Heart left ventricle (tissue), 16 donors: ENCODE measurements at regions of chr6 and their contacts with region 1.

Region 1: DNA sequence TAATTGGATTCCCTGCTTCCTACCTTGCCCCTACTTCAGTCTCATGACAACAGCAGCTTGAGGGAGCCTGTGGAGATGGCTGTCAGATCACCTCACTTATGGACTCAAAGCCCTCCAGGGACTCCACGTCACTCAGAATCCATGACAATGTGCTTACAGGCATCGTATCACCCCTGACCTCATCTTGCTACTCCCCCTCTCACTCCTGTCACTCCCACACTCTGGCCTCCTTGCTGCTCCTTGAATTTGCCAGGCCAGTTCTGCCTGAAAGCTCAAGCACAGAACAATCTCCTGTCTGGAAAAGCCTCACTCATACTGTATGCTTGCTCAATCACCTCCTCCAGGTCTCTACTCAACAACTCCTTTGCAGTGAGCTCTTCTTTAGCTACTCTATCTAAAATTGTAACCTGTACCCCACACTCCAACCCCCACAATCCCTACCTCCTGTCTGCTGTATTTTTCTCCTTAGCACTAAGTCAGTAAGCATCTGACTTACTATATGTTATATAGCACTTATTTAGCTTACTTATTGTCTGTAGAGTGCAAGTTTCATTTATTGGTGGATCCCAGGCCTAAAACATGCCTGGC is 10.7 kb upstream of the GSTA4 start:
- DNase-seq: no peak
- ATAC-seq: no peak
- H3K4me3 ChIP-seq: no peak overlapping the region
- H3K27ac ChIP-seq: no peak overlapping the region
- H3K4me1 ChIP-seq: no peaks in the 10 kb centered on the region
- H3K27me3 ChIP-seq: no peaks in the 10 kb centered on the region
- CTCF ChIP-seq: no peak
- POLR2A ChIP-seq: no peak

Region 2: DNA sequence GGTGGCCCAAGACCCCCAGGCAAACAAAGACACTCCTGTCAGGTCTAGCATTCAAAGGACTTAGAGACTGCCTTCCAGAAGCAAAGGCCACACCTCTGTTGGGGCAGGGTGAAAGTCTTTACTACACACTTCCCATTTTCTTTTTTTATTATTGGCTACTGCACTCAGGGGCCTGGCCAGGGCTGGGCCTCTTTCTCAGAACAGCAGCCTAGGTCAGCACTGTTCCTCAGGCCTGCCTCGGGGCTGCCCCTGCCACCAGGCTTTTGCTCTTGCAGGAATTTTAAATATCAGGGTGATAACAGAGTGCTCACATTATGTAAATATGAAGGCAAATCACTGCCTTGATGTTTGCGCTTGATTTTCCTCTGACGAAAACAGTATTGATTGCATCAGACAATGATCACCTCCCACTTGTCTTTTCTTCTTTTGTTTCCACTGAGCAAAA is 29.1 kb before region 1 on chr6:
- intact Hi-C with region 1: no loop called
- DNase-seq: no peak
- ATAC-seq: peak in 1 of 4 donors; percentile 62
- H3K4me3 ChIP-seq: no peak overlapping the region
- H3K27ac ChIP-seq: no peak overlapping the region
- H3K4me1 ChIP-seq: peaks cover 0 to 5% (median 0%) of the 10 kb centered on the region in 12 donors
- H3K27me3 ChIP-seq: no peaks in the 10 kb centered on the region
- CTCF ChIP-seq: no peak
- POLR2A ChIP-seq: no peak

Region 3: GRCh38 chr6:52994839-52995088 is 11.0 kb before region 1 on chr6:
- intact Hi-C with region 1: no loop called
- DNase-seq: peak in 4 of 5 donors; percentile 28 to 47 (median 46)
- ATAC-seq: peak; percentile 11 to 40 (median 32)
- H3K4me3 ChIP-seq: peak overlapping the region; percentile 66 to 80 (median 74)
- H3K27ac ChIP-seq: peak overlapping the region; percentile 87 to 98 (median 92)
- H3K4me1 ChIP-seq: peaks cover 0 to 25% (median 15%) of the 10 kb centered on the region in 12 donors
- H3K27me3 ChIP-seq: no peaks in the 10 kb centered on the region
- CTCF ChIP-seq: no peak
- POLR2A ChIP-seq: no peak

Region 4: DNA sequence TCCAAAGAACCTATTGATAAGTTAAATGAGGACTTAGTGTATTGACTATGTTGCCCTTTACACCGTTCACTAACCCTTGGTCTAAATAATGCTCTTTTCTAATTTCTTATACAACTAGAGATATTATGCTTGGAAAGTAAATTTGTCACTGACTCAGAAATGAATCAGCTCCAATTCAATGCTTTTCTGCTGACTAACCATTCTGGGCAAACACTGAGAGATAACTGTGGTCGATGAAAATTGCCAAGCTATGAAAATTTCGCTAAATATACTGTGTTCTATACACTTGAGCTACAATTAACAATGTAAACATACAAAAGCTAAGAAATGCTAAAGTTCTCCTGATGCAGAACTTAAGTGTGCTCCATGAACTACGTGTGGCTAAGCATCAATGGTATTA is 36.4 kb after region 1 on chr6:
- intact Hi-C with region 1: loop called in 1 of 10 experiments (anchors 5 kb)
- DNase-seq: no peak
- ATAC-seq: peak in 1 of 4 donors; percentile 35
- H3K4me3 ChIP-seq: no peak overlapping the region
- H3K27ac ChIP-seq: peak overlapping the region in 9 of 12 donors; percentile 27 to 84 (median 74)
- H3K4me1 ChIP-seq: peaks cover 0 to 53% (median 21%) of the 10 kb centered on the region in 12 donors
- H3K27me3 ChIP-seq: no peaks in the 10 kb centered on the region
- CTCF ChIP-seq: no peak
- POLR2A ChIP-seq: no peak